ENCODE measurements at regions of chr19 and their contacts with region 1.

Region 1: DNA sequence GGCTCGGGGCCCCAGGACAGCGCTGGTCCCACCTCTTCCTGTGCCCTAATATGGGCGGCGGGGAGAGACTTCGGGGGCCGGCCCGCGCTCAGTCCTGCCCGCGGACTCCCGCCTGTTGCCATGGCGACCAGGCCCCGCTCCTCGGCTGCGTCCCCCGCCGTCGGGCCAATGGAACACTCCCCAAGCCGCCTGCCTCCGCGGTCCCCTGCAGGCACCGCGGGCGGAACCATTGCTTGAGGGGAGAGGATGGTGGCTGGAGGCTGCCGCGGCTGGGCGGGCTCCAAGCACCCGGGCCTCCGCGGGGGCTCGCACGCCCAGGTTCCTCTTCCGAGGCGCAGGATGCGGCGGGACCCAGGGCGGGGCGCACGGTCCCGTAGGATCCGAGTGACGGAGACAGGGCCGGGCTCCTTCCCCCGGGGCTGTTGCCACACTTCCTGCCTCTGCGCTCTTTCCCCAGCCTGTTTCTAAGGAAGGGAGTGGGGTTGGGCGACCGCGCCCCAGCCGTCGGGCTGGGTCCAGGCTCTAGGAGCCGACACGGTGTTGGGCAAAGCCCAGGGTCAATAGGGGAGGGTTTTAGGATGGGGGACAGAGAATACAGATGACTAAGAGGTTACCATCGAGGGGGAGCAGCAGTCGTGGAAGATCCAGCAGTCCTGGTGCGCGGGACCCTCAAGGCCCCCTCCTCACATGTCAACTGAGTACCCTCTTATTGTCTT is 1.2 kb upstream of the JUNB start:
- DNase-seq: peak; percentile 98
- H3K4me3 Mint-ChIP-seq: peak overlapping the region; percentile 94
- H3K27ac Mint-ChIP-seq: peak overlapping the region; percentile 98
- H3K4me1 Mint-ChIP-seq: peaks cover 31% of the 10 kb centered on the region
- H3K27me3 Mint-ChIP-seq: no peaks in the 10 kb centered on the region
- CTCF ChIP-seq: no peak

Region 2: GRCh38 chr19:12722566-12723380 is 67.3 kb before region 1 on chr19:
- CTCF ChIA-PET with region 1: interaction called, 3 read pairs
- POLR2A ChIA-PET with region 1: interaction called, 53 read pairs
- intact Hi-C with region 1: loop called (anchors 5 kb)
- DNase-seq: peak; percentile 100
- H3K4me3 Mint-ChIP-seq: peak overlapping the region; percentile 96
- H3K27ac Mint-ChIP-seq: peak overlapping the region; percentile 96
- H3K4me1 Mint-ChIP-seq: peaks cover 12% of the 10 kb centered on the region
- H3K27me3 Mint-ChIP-seq: no peaks in the 10 kb centered on the region
- CTCF ChIP-seq: no peak

Region 3: DNA sequence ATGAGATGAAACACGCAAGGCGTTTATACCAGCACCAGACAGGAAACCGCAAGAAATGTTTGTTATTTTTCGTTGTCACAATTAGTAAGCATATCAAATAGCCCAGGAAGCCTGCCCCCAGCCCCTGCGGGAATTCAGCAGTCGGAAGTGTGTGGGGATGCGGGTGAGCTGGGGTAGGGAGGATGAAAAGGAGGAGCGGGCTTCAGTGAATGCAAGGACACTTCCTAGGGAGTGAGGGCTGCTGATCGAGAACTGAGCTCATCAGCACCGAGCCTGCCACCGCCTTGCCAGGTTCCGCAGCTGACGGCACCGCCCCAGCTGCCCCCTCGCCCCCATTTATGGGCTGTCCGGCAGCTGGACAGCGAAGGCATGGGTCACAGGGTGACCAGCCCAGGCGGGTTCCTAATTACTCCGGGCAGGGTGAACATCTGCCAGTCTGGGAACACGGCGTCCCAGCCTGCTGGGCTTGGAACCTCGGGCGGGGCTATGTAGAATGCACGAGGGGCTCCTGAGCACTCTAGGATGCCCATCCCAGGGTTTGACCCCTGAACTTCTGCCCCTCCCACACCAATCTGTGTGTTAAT is 40.0 kb before region 1 on chr19:
- CTCF ChIA-PET with region 1: interaction called, 307 read pairs
- POLR2A ChIA-PET with region 1: interaction called, 11 read pairs
- intact Hi-C with region 1: no loop called
- DNase-seq: peak; percentile 42
- H3K4me3 Mint-ChIP-seq: peak overlapping the region; percentile 58
- H3K27ac Mint-ChIP-seq: peak overlapping the region; percentile 76
- H3K4me1 Mint-ChIP-seq: peaks cover 24% of the 10 kb centered on the region
- H3K27me3 Mint-ChIP-seq: no peaks in the 10 kb centered on the region
- CTCF ChIP-seq: no peak

Region 4: GRCh38 chr19:12766051-12766521 is 24.0 kb before region 1 on chr19:
- CTCF ChIA-PET with region 1: interaction called, 307 read pairs
- POLR2A ChIA-PET with region 1: interaction called, 17 read pairs
- intact Hi-C with region 1: no loop called
- DNase-seq: peak; percentile 77
- H3K4me3 Mint-ChIP-seq: peak overlapping the region; percentile 69
- H3K27ac Mint-ChIP-seq: no peak overlapping the region
- H3K4me1 Mint-ChIP-seq: peaks cover 5% of the 10 kb centered on the region
- H3K27me3 Mint-ChIP-seq: no peaks in the 10 kb centered on the region
- CTCF ChIP-seq: peak; percentile 67

Region 5: GRCh38 chr19:12806239-12807081 is 16.4 kb after region 1 on chr19 and contains the start of gene RNASEH2A:
- CTCF ChIA-PET with region 1: interaction called, 3 read pairs
- POLR2A ChIA-PET with region 1: interaction called, 54 read pairs
- intact Hi-C with region 1: no loop called
- DNase-seq: peak; percentile 89
- H3K4me3 Mint-ChIP-seq: peak within 1 kb of the TSS; percentile 94
- H3K27ac Mint-ChIP-seq: peak within 1 kb of the TSS; percentile 83
- H3K4me1 Mint-ChIP-seq: peaks cover 15% of the 10 kb centered on the region
- H3K27me3 Mint-ChIP-seq: no peaks in the 10 kb centered on the region
- CTCF ChIP-seq: no peak
- total RNA-seq, gene RNASEH2A: 11.2 and 16.7 TPM in 2 replicates

Region 6: DNA sequence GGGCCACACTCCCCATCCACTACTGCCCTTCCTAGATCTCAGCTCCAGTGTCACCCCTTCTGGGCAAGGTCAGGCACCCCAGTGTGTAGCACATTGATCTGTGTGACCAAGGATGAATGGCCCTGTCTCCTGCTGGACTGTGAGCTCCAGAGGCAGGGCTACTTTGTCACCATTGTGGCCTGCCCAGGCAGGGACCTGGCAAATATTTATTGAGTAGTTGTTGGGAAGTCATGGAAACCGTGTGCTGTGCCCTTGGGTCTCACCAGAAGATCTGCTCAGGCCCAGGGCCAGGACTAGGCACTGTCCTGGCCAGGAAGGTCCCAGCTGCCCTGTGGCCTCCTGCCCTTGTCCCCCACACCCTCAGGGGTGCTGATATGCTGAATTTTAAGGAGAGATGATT is 338.5 kb after region 1 on chr19:
- CTCF ChIA-PET with region 1: no interaction called
- POLR2A ChIA-PET with region 1: no interaction called
- intact Hi-C with region 1: no loop called
- DNase-seq: no peak
- H3K4me3 Mint-ChIP-seq: no peak overlapping the region
- H3K27ac Mint-ChIP-seq: no peak overlapping the region
- H3K4me1 Mint-ChIP-seq: no peaks in the 10 kb centered on the region
- H3K27me3 Mint-ChIP-seq: no peaks in the 10 kb centered on the region
- CTCF ChIP-seq: no peak

Measured in MCF 10A (cell line).